ENCODE measurements at regions of chr2 and their contacts with region 1.

Region 1: DNA sequence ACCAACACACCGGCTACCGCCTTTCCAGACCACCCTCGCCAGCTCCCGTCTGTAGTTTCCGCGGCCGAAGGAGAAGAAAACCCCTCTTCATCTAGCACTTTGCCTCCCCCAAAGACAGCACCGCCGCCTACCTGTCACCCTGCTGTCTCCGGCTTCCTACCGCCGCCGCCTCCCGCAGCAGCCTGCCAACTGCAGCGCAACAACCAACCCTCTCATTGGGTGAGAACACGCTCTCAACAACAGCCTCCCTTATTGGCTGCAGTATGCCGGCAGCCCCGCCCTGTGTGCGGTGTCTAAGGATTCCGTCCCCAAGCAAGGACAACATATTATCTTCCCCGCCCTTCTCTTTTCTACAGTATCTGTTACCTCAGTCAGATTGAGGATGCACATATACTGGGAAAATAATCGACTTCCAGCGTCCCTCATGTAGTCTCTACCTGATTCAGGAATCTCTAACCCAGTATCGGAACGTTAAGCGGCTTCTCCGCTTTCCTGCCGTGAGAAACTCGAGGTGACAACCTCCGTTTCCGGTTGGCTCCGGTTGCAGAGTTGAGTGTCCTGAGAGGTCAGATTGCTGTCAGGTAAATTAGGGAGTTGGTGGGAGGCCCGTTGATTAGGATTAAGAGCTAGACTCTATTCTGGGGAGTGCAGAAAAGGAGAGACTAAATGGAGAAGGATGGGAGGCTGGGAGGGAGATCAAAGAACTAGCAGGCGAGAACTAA is at the starts of genes HYCC2 and NDUFB3:
- DNase-seq: peak; percentile 90
- H3K4me3 Mint-ChIP-seq: peak within 1 kb of the TSS; percentile 90
- H3K27ac Mint-ChIP-seq: peak within 1 kb of the TSS; percentile 95
- H3K4me1 Mint-ChIP-seq: peaks cover 49% of the 10 kb centered on the region
- H3K27me3 Mint-ChIP-seq: no peaks in the 10 kb centered on the region
- total RNA-seq, gene HYCC2: 26.1 and 29.4 TPM in 2 replicates
- total RNA-seq, gene NDUFB3: 105 and 121 TPM in 2 replicates

Region 2: DNA sequence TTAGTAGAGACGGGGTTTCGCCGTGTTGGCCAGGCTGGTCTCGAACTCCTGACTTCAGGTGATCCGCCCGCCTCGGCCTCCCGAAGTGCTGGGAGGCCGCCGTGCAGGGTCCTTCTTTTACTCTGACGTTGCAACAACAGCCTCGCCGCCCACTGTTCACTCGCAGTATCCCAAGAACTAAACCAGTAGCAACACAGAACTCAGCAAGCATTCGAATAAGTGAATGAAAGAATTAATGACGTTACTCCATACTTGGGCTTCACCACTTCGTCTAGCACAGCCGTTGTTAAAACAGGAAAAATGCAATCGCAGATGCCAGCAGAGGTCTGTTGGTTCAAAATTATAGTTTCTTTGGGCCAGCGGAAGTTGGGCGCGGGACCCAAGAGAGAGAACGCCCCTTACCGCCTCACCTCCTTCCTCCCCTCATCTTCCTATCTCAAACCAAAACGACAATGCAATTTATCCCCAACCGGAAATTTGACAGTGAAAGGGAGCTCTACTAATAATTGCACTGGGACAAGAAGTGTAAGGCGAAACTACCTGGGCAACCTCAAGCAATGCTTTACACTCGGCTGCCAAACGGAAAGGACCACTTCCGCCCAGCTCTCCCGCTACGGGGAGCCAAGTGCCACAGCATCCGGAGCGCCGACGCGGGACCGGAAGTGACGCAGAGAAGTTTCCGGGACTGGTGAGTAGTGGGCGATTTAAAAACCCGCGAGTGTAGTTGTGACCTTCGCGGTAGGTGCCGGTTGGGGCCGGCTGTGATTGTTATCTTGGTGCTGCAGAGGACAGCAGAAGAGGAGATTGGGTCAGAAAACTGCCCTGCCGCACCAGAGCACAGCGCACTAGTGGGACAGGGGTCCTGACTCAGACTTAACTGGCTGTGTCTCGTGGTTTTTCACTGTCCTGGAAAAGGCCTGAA is 182.7 kb before region 1 on chr2 and contains the starts of genes NIF3L1 and PPIL3:
- intact Hi-C with region 1: loop called (anchors 1 kb)
- DNase-seq: peak; percentile 96
- H3K4me3 Mint-ChIP-seq: peak within 1 kb of the TSS; percentile 97
- H3K27ac Mint-ChIP-seq: peak within 1 kb of the TSS; percentile 99
- H3K4me1 Mint-ChIP-seq: peaks cover 54% of the 10 kb centered on the region
- H3K27me3 Mint-ChIP-seq: no peaks in the 10 kb centered on the region
- total RNA-seq, gene NIF3L1: 26.6 and 27.3 TPM in 2 replicates
- total RNA-seq, gene PPIL3: 44.2 TPM in 2 replicates

Region 3: DNA sequence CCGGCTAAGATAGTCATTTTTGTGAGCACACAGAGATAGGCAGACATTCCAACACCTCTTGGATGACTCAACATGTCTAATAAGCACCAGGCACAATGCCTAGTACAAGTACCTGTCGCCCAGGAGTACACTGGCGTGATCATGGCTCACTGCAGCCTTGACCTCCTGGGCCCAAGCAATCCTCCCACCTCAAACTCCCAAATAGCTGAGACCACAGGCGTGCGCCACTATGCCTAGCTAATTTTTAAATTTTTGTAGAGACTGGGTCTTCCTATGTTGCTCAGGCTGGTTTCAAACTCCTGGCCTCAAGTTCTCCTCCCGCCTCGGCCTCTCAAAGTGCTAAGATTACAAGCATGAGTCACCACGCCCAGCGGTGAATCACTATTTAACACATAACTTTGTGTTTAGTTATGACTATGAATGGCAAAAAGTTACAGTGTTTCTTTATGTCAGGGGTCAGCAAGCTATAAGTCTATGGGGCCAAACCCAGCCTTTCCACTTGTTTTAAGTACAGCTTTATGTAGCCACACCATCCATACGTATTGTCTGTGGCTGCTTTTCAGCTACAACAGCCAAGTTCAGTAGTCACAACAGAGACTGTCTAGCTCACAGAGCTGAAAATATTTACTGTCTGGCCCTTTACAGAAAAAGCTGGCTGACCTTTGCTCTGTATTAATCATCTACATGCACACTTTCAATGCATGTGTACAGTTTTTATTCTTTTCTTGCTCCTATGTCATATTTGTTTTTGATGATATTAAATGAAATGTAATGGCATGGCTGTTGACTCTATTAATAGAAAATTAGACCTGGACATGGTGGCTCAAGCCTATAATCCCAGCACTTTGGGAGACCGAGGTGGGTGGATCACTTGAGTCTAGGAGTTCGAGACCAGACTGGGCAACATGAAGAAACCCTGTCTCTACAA is 126.9 kb before region 1 on chr2:
- intact Hi-C with region 1: loop called (anchors 1 kb)
- DNase-seq: peak; percentile 15
- H3K4me3 Mint-ChIP-seq: no peak overlapping the region
- H3K27ac Mint-ChIP-seq: peak overlapping the region; percentile 70
- H3K4me1 Mint-ChIP-seq: peaks cover 23% of the 10 kb centered on the region
- H3K27me3 Mint-ChIP-seq: no peaks in the 10 kb centered on the region

Region 4: GRCh38 chr2:201021914-201022313 is 49.7 kb before region 1 on chr2:
- intact Hi-C with region 1: loop called (anchors 2 kb)
- DNase-seq: no peak
- H3K4me3 Mint-ChIP-seq: peak overlapping the region; percentile 40
- H3K27ac Mint-ChIP-seq: no peak overlapping the region
- H3K4me1 Mint-ChIP-seq: peaks cover 29% of the 10 kb centered on the region
- H3K27me3 Mint-ChIP-seq: no peaks in the 10 kb centered on the region

Region 5: DNA sequence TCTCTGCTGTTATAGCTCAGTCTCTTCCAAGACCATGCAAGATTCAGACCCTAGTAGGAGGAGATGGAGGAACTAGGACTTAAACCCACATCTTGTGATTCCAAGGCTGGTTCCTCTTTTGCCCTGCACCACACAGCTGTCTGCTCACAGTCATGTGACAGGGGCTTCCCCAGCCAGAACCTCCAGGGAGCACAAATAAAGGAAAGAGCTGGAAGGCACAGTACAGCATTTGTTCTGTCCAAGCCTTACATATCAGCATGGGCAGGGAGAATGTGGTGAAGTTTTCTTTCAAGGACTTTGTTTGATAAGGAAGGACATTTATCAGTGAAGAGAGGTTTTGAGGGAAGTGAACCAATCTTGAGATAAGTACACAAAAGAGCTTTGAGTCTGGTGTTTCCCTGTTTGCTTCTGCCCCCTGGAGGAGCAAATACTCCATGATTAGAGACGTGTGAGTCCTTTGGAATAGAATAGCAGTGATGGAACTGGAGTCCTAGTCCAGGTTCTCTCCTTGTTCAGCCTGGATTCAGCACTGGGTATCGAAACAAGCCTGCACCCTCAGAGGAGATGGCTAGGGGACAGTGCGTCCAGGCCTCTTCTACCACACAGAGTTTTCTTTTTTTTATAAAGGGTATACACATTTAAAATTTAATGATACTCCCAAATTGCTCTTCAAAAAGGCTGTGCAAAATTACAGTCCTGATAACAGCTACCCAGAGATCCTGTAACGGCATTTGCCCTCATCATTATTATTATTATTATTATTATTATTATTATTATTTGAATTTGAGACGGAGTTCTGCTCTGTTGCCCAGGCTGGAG is 86.7 kb after region 1 on chr2:
- intact Hi-C with region 1: loop called (anchors 1 kb)
- DNase-seq: peak; percentile 41
- H3K4me3 Mint-ChIP-seq: no peak overlapping the region
- H3K27ac Mint-ChIP-seq: peak overlapping the region; percentile 21
- H3K4me1 Mint-ChIP-seq: peaks cover 25% of the 10 kb centered on the region
- H3K27me3 Mint-ChIP-seq: no peaks in the 10 kb centered on the region

Measured in activated T-helper 1 cell treated with anti-CD3 and anti-CD28 coated beads, Interleukin-12 subunit alpha, Interleukin-12 subunit beta, Interleukin-2, Interleukin-4 antibody, amounts not matched to agents 30 ng/mL and 10 ng/mL and 1 ng/mL, durations not matched to agents 14 hours and 24 hours and 36 hours (primary cell).